Dendritic cell treated with granulocyte-macrophage colony-stimulating factor and Interleukin-4, amounts not matched to agents 40 ng/mL and 50 ng/mL, for 4 days (primary cell): ENCODE measurements at regions of chr10 and their contacts with region 1.

Region 1: DNA sequence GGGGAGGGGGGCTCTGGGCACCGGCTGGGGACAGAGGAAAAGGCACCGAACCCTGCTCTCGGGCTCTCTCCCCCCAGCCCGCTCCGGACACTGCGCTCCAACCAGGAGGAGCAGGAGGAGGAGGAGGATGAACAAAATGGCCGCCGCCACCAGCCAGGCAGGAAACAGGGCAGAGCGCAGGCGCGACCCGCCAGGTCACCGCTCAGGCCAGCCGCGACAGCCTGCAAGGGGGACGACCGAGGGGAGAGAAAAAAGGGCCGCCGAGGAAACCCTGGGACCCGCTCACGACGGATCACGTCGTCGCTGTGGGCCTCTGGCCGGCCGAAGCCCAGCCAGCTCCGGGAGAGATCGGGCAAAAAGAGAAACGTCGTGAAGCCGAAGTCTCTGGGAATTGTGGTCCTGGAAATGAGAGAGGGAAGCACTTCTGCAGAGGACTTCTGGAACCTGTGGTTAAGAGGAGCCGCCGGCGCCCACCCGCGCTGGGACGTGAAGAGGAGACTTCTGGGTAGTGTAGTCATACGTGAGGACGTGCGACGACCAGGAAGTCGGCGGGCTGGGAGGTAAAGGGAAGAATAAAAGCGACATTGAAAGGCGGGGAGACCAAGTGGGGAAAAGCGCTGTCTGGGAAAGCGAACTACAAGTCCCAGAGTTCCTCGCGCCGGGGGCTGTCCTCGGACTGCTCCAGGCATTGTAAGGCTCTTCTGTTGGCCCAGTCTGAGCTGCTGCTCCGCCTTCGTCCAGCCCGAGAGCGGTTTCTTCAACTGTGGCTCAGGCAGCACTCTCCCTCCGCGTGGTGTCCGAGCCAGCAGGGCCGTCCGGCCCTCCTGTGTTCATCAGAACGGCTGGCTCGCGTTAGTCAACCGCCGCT is at the start of gene TIAL1:
- H3K4me3 Mint-ChIP-seq: peak within 1 kb of the TSS; percentile 94
- H3K27ac Mint-ChIP-seq: peak within 1 kb of the TSS; percentile 95
- H3K4me1 Mint-ChIP-seq: peaks cover 40% of the 10 kb centered on the region
- H3K27me3 Mint-ChIP-seq: no peaks in the 10 kb centered on the region

Region 2: DNA sequence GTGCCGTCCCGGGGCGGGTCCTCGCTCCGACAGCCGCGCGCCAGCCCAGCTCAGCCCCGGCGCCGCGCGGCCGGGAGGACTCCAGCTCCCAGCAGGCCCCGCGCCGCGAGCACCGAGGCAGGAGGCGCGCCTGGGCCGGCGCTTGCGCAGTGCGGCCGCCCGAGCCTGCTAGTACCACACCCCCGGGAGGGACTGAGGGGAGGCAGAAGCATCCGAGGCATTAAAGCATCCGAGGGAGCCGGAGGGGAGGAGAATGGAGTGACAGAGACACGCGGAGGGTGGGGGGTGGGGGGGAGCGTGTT is 389.5 kb before region 1 on chr10 and contains the start of gene GRK5:
- intact Hi-C with region 1: loop called (anchors 5 kb)
- H3K4me3 Mint-ChIP-seq: peak within 1 kb of the TSS; percentile 85
- H3K27ac Mint-ChIP-seq: peak within 1 kb of the TSS; percentile 89
- H3K4me1 Mint-ChIP-seq: peaks cover 31% of the 10 kb centered on the region
- H3K27me3 Mint-ChIP-seq: peaks cover 17% of the 10 kb centered on the region

Region 3: DNA sequence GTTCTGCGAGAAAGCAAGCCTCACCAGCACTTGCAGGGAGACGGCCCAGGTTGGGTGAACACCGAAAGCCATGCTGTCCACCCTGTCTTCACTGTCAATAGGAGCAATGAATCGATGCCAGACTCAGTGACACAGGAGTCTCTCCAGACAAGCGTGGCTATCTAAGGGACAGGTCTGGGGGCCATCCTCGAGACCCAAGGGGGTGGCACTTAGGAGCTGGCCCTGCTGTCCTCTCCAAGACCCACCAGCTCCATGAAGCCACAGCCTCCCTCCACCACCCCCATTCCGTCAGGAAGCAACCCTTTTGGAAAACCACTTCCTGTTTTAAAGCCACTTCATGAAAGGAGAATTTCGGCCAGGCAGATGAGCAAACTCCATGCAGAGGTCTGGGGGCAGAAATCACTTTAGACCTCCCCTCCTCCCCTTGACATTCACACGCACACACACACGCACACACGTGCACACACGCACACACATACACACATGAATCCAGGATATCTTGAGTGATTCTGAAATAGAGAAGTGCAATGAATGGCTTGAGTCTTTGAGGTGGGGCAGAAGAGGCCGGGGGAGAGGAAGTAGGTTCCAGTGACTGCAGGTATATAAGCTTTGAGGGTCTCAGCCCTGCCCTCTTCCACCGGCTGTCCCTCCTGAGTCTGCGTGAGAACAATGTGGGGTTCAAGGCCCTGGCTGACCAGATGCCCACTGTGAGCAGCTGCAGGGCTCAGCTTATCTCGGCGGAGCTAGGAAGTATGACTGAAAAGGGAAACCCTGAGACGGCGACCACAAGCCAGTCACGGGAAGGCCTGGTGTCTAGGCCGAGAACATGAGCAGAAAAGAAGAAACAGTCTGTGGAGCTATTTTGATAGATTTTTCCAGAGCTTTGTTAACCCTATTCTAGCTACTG is 79.3 kb before region 1 on chr10:
- intact Hi-C with region 1: loop called (anchors 1 kb)
- H3K4me3 Mint-ChIP-seq: peak overlapping the region; percentile 52
- H3K27ac Mint-ChIP-seq: peak overlapping the region; percentile 77
- H3K4me1 Mint-ChIP-seq: peaks cover 67% of the 10 kb centered on the region
- H3K27me3 Mint-ChIP-seq: no peaks in the 10 kb centered on the region

Region 4: DNA sequence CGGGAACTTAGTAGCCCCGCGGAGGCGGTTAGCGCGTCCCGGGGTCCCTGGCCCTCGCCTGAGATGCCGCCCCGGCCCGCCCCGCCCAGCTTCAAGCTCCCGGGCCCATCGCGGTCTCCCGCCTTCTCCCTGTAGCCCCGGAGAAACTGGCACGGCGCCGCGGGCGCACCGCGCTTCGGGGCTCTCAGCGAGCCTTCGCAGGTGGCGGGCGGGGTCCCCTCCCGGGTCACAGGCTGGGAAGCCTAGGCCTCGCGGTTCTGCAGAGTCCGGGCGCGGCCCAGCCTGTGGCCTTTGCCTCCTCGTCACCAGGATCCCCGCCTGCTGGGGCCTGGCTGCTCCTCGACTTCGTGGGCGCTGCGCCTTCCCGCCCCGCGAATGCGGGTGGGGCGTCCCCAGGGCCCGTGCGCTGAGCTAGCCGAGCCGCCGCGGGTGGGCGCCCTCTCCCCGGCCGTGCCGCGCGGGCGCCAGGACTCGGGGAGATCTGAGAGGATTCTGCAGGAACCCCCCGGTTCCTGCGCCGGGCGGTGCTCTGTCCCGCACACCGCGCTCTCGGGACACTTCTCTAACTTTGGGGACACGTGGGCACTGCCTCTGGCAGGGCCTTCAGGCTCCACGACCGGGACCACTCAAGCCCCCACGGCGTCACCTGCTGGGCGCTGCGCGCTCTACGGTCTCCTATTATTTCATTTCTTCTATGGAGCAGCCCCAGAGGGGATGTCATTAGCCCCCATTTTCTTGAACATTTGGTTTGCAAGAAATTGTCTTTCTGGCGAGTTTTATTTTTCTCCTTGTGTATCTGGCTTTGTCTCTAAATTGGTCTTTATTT is 53.6 kb before region 1 on chr10:
- intact Hi-C with region 1: loop called (anchors 1 kb)
- H3K4me3 Mint-ChIP-seq: peak overlapping the region; percentile 89
- H3K27ac Mint-ChIP-seq: peak overlapping the region; percentile 89
- H3K4me1 Mint-ChIP-seq: peaks cover 51% of the 10 kb centered on the region
- H3K27me3 Mint-ChIP-seq: peaks cover 18% of the 10 kb centered on the region

Region 5: GRCh38 chr10:119650692-119651513 is 54.1 kb after region 1 on chr10 and contains the start of gene BAG3:
- intact Hi-C with region 1: loop called (anchors 5 kb)
- H3K4me3 Mint-ChIP-seq: peak within 1 kb of the TSS; percentile 97
- H3K27ac Mint-ChIP-seq: peak within 1 kb of the TSS; percentile 92
- H3K4me1 Mint-ChIP-seq: peaks cover 42% of the 10 kb centered on the region
- H3K27me3 Mint-ChIP-seq: peaks cover 19% of the 10 kb centered on the region

Region 6: DNA sequence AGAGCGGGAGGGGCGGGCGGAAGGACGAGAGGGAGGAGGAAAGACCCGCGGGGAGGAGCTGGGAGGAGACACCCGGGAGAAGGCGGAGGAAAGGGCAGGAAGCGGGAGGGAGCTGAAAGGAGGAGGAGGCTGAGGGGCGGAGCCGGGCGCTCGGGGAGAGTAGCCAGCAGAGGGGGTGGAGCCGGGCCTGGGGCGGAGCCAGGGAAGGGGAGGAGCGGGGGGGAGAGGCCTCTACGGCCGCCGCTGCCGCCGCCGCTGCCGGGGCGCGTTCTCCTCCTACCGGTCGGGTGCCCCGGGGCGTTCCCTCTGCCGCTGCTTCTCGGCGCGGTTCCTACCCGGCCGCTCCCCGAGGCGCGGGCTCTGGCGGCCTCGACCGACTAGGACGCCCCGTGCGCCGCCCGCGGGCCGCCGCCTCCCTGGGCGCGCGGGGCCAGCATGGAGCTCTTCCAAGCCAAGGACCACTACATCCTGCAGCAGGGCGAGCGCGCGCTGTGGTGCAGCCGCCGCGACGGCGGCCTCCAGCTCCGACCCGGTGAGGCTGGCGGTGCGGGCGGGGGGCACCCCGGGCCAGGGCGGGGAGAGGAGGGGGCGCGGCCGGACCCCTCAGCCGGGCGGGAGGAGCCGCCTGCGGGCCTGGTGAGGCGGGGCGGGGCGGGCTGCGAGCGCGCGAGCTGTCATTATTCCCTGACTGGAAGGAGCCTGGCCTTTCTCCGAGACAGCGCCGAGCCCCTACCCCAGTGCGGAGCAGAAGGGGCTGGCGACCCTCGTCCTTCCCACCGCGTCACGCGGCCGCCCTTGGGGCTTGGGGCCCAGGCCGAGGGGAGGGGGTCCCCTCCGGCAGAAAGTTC is 129.3 kb after region 1 on chr10 and contains the start of gene INPP5F:
- intact Hi-C with region 1: loop called (anchors 1 kb)
- H3K4me3 Mint-ChIP-seq: peak within 1 kb of the TSS; percentile 71
- H3K27ac Mint-ChIP-seq: peak within 1 kb of the TSS; percentile 97
- H3K4me1 Mint-ChIP-seq: peaks cover 36% of the 10 kb centered on the region
- H3K27me3 Mint-ChIP-seq: no peaks in the 10 kb centered on the region

Region 7: GRCh38 chr10:119859420-119860258 is 262.9 kb after region 1 on chr10:
- intact Hi-C with region 1: loop called (anchors 10 kb)
- H3K4me3 Mint-ChIP-seq: no peak overlapping the region
- H3K27ac Mint-ChIP-seq: no peak overlapping the region
- H3K4me1 Mint-ChIP-seq: peaks cover 21% of the 10 kb centered on the region
- H3K27me3 Mint-ChIP-seq: no peaks in the 10 kb centered on the region